Motor neuron (in vitro differentiated cells): ENCODE measurements at regions of chr7 and their contacts with region 1.

Region 1: DNA sequence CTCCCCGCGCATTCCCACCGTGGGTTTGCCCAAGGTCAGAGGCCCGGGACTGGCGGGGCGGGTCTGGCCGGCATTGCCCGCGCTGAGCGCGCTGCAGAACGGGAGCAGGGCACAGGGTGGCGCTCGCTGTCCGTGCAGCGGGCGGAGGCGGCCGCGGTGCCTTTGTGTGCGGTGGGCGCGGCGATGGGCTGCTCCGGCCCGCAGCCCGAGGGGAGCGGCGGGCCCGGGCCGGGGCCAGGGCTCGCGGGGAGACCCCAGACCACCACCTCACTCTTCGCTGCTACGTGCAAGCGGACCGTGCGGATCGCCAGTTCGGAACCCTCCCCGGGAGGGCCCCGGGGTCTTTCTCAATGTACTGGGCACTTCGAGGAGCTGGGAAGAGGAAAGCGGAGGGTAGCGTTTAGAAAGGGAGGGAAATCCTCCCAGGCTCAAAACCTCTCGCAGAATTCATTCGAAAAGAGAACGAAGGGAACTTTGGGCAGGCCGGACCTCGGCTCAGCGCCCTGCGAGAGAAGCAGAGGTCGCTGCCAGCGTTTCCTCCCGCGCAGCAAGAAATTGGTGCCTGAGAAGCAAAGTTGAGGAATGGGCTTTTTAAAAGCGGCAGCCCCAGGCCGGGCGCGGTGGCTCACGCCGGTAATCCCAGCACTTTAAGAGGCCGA is 8.5 kb downstream of the SP8 start:
- ATAC-seq: peak; percentile 92 to 100 (median 96)
- H3K4me3 ChIP-seq: peak overlapping the region; percentile 31 to 47 (median 43)
- H3K27ac ChIP-seq: peak overlapping the region in 1 of 2 donors; percentile 73
- H3K4me1 ChIP-seq: peaks cover 26 to 27% of the 10 kb centered on the region in 2 donors

Region 2: DNA sequence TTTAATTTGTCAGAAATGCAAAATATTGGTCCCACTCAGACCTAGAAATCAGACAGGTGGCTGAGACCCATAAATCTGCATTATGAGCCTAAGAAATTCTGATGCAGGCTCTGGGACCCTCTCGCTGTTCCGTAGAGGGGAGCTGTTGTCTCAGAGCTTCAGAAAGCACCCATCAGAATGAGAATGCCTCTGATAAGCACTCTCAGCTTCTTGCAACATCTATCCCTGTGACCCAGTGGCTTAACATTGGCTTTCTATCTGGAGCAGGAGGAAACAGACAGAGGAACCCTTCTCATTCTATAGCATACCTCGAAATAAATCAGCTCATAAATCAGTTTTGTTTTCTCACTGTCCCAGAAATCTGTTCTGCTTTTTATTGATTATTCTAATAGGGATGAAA is 465.1 kb after region 1 on chr7:
- in situ Hi-C with region 1: loop called in 3 of 9 experiments (anchors 10 to 25 kb)
- ATAC-seq: peak in 3 of 8 experiments; percentile 32 to 44 (median 34)
- H3K4me3 ChIP-seq: no peak overlapping the region
- H3K27ac ChIP-seq: no peak overlapping the region
- H3K4me1 ChIP-seq: peaks cover 0 to 3% of the 10 kb centered on the region in 2 donors

Region 3: DNA sequence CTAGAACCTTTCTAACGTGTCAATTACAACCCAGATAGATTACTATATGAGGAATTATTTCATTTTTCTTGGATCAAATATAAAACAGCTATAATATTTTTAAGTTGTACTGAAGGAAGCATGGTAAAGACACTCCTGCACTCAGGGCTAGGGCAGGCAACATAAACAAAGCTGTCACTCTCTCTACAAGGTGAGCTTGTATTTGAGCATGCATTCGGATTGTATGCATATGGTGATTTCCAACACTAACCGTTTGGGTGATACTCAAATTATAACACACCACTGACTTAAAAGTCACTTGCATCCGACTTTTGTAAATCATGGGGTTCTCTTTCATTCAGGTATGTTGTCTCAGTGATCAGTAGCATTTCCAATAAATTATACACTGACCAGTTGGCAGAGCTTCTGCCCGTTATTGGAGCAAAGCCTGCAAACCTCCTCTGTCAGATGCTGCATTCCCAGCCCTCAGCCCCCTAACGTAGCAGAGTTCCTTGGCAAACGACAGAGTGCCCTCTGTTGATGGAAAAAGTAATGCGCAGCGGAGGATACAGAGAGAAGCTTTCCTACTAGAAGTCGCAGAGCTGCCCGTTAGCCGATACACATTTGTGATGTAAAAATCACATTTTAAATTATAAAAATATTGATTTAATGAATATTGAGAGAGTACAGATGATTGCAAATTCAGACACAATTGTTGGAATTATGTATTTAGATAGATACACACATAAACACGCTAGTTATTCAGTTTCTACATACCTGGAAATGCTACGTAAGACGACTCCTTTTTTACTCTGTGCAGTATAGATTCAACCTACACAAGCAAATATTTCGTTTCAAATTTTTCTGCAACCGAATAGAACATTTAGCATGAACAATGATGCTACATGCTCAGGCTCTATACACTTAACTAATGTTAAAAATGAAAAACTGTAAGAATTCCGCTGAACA is 475.8 kb after region 1 on chr7:
- in situ Hi-C with region 1: loop called in 8 of 9 experiments (anchors 10 to 25 kb)
- ATAC-seq: peak; percentile 81 to 100 (median 97)
- H3K4me3 ChIP-seq: peak overlapping the region in 3 of 5 donors; percentile 7 to 20 (median 7)
- H3K27ac ChIP-seq: no peak overlapping the region
- H3K4me1 ChIP-seq: peaks cover 34 to 49% of the 10 kb centered on the region in 2 donors